K562 (cell line): ENCODE measurements at regions of chr18 and their contacts with region 1.

Region 1: GRCh38 chr18:36200354-36200771 is 13.1 kb downstream of the MOCOS start:
- DNase-seq: peak; percentile 73 to 89 (median 84)
- ATAC-seq: peak; percentile 83
- H3K4me3 ChIP-seq: no peak overlapping the region
- H3K27ac ChIP-seq: no peak overlapping the region; the same call in 2 of the 3 replicates
- H3K4me1 ChIP-seq: peaks cover 15 to 17% of the 10 kb centered on the region in 2 experiments; a peak in 4 of 5 replicates
- H3K27me3 ChIP-seq: no peaks in the 10 kb centered on the region
- CTCF ChIP-seq: no peak
- EP300 ChIP-seq: peak; percentile 93
- POLR2A ChIP-seq: no peak
- RAD21 ChIP-seq: no peak

Region 2: GRCh38 chr18:35071819-35072247 is 1128.5 kb before region 1 on chr18:
- CTCF ChIA-PET with region 1: no interaction called
- POLR2A ChIA-PET with region 1: no interaction called
- in situ Hi-C with region 1: no loop called
- intact Hi-C with region 1: no loop called
- DNase-seq: no peak
- ATAC-seq: peak; percentile 32; the same call in 1 of the 3 replicates
- H3K4me3 ChIP-seq: no peak overlapping the region
- H3K27ac ChIP-seq: no peak overlapping the region
- H3K4me1 ChIP-seq: peaks cover 0 to 6% of the 10 kb centered on the region in 2 experiments; a peak in 2 of 5 replicates
- H3K27me3 ChIP-seq: no peaks in the 10 kb centered on the region
- CTCF ChIP-seq: peak in 1 of 3 experiments; percentile 14; a peak in 1 of 6 replicates
- EP300 ChIP-seq: no peak
- POLR2A ChIP-seq: no peak
- RAD21 ChIP-seq: no peak

Region 3: GRCh38 chr18:36186911-36187834 is 13.2 kb before region 1 on chr18 and contains the start of gene MOCOS:
- CTCF ChIA-PET with region 1: no interaction called
- POLR2A ChIA-PET with region 1: interaction called, 35 read pairs
- in situ Hi-C with region 1: no loop called
- intact Hi-C with region 1: no loop called
- DNase-seq: peak; percentile 91 to 97 (median 95)
- ATAC-seq: peak; percentile 95
- H3K4me3 ChIP-seq: peak within 1 kb of the TSS; percentile 68
- H3K27ac ChIP-seq: peak within 1 kb of the TSS; percentile 61
- H3K4me1 ChIP-seq: peaks cover 12 to 31% of the 10 kb centered on the region in 2 experiments; a peak in 4 of 5 replicates
- H3K27me3 ChIP-seq: no peaks in the 10 kb centered on the region
- CTCF ChIP-seq: peak in 1 of 3 experiments; percentile 4; a peak in 1 of 6 replicates
- EP300 ChIP-seq: no peak
- POLR2A ChIP-seq: peak; percentile 84
- RAD21 ChIP-seq: no peak
- polyA plus RNA-seq, gene MOCOS: 4.5 to 4.6 TPM